Sciatic nerve (tissue), 2 donors: ENCODE measurements at regions of chr10 and their contacts with region 1.

Region 1: GRCh38 chr10:130074639-130075038 is 36.0 kb downstream of the C10orf143 start:
- DNase-seq: no peak
- ATAC-seq: no peak

Region 2: DNA sequence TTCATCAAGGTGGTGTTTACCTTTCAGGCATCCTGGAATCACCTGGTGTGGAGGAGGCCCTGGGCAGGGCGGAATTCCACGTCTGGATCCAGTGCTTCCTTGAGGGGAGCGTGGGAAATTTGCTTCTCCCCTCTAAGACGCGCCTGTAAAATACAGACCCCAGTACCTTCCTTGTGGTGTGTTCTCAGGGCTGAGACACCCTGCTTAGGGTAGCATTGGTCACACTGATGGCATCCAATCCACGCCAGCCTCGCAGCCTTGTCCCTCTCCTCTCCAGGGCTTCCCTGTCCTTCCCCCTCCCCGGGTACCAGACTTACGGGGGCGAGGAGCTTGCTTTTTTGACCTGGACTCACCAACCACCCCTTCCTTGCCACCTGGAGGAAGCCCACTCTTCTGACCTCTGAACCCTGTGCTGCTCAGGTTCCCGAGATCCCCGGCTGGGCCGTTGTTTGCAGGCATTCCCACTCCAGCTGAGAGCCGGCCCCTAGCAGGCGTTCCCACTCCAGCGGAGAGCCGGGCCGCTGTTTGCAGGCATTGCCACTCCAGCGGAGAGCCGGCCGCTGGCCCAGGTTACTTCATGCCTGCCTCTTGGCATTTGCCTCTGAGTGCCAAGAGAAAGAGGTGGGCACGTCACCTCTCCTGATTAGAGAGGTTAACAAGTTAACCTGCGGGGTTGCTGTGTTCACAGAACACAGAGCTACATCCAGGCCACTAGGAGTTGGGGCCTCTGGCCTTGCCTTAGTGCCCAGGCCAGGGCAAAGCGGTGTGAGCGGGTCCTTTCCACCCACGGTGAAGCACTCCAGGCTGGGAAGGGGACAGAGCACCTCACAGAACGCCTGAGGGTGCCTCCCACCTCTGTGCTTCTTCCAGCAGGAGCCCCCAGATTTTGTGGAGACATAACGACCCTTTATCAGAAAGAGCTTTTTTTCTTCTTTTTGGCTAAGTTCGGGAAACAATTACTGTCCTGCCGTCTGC is 1572.2 kb after region 1 on chr10:
- intact Hi-C with region 1: loop called (anchors 5 kb)
- DNase-seq: no peak
- ATAC-seq: no peak